Mammary epithelial cell (primary cell): ENCODE measurements at regions of chrX and their contacts with region 1.

Region 1: GRCh38 chrX:132041015-132041414 is 17.9 kb downstream of the STK26 start:
- DNase-seq: peak; percentile 49
- H3K4me3 ChIP-seq: no peak overlapping the region
- H3K27ac ChIP-seq: no peak overlapping the region
- H3K4me1 ChIP-seq: peaks cover 3% of the 10 kb centered on the region
- H3K27me3 ChIP-seq: no peaks in the 10 kb centered on the region
- CTCF ChIP-seq: no peak

Region 2: DNA sequence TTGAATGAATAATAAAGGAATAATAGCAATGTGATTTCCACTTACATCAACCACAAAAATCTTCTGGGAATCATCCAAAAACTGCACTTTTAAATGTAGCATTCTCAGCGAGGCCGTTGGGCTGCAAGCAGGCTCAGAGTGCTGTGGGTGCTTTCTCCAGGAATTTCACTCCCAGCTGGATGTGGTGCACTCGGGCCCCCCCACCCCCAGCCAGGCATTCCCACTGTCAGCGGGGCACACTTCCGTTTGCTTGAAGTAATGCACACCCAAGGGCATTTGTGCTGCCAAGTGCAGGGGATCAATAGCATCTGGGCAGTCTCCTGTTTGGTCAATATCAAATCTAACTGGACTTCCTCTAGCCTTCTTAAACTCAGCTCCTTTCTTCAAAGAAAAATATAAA is 86.7 kb after region 1 on chrX and contains the start of gene FRMD7:
- CTCF ChIA-PET with region 1: no interaction called
- dilution Hi-C with region 1: no loop called
- in situ Hi-C with region 1: no loop called
- intact Hi-C with region 1: loop called (anchors 10 kb)
- DNase-seq: no peak
- H3K4me3 ChIP-seq: no peak within 1 kb of the TSS
- H3K27ac ChIP-seq: no peak within 1 kb of the TSS
- H3K4me1 ChIP-seq: no peaks in the 10 kb centered on the region
- H3K27me3 ChIP-seq: no peaks in the 10 kb centered on the region
- CTCF ChIP-seq: no peak
- total RNA-seq, gene FRMD7: 0.50 TPM in 1 of 2 donors, not detected in the other